ENCODE measurements at regions of chr1 and their contacts with region 1.

Region 1: DNA sequence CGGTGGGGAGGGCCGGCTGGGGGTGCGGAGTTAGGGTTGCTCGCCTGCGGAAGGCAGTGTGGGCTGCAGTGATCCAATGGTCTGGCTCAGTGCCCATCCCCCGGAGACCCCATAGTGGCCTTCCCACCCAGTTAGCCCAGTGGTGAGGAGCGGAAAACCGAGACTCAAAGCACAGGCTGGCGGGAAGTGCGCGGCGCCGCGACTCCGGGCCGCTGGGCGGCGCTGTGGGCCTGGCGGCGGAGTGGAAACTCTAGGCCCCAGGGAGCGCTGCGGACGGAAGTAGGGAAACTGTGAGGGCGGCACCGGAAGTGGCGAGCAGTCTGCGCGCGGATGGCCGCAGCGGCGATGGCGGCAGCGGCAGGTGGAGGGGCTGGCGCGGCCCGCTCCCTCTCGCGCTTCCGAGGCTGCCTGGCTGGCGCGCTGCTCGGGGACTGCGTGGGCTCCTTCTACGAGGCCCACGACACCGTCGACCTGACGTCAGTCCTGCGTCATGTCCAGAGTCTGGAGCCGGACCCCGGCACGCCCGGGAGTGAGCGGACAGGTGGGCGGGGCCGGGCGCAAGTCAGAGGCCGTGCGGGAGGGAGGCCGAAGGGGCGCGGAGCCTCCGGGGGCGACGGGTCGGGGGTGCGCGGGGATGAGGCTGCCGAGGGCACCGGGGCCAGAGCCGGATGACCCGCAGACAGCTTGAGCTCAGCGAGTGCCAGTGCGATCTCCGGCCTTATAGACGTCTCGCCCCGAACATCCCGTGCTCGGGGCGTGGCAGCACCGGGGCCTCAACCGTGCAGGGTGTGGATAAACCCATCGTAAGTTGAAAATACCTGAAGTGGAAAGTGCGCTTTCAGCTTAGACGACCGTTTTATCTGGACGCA is at the start of gene ADPRS:
- DNase-seq: peak; percentile 89
- H3K4me3 Mint-ChIP-seq: peak within 1 kb of the TSS; percentile 90
- H3K27ac Mint-ChIP-seq: peak within 1 kb of the TSS; percentile 83
- H3K4me1 Mint-ChIP-seq: peaks cover 9% of the 10 kb centered on the region
- H3K27me3 Mint-ChIP-seq: peaks cover 3% of the 10 kb centered on the region
- total RNA-seq, gene ADPRS: 33.6 and 35.3 TPM in 2 replicates

Region 2: DNA sequence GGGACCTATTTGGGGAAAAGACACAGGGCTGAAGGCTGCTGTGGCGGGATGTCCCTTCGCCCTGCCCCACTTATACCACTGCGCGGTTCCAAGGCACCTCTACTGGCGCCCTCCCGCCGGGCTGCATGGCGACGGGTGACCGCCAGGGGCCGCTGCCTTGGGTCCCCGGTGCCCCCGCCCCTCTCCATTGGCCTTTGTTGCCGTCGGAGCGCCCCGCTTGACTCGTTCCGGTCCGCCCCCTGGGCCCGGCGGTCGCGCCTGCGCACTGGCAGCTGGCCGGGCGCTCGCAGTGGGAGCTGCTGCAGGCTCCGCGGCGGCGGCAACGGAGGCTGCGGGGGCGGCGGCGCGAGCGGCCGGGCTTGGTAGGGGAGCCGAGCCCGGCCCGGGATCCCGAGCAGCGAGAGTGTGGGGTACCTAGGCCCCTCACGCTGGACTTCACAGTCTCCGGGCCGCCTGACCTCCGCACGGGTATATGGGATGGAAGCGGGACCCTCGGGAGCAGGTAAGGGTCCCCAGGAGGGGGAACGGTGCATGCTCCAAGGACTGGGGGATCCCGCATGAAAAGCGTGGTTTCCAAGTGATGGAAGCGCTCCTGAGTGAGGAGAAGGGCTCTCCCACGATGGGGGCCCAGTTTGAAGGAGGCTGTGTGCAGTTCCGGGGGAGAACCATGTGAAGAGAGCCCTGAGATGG is 205.7 kb before region 1 on chr1 and contains the start of gene AGO1:
- intact Hi-C with region 1: loop called (anchors 1 kb)
- DNase-seq: peak; percentile 95
- H3K4me3 Mint-ChIP-seq: peak within 1 kb of the TSS; percentile 92
- H3K27ac Mint-ChIP-seq: peak within 1 kb of the TSS; percentile 73
- H3K4me1 Mint-ChIP-seq: peaks cover 41% of the 10 kb centered on the region
- H3K27me3 Mint-ChIP-seq: peaks cover 3% of the 10 kb centered on the region
- total RNA-seq, gene AGO1: 36.9 and 38.6 TPM in 2 replicates

Region 3: DNA sequence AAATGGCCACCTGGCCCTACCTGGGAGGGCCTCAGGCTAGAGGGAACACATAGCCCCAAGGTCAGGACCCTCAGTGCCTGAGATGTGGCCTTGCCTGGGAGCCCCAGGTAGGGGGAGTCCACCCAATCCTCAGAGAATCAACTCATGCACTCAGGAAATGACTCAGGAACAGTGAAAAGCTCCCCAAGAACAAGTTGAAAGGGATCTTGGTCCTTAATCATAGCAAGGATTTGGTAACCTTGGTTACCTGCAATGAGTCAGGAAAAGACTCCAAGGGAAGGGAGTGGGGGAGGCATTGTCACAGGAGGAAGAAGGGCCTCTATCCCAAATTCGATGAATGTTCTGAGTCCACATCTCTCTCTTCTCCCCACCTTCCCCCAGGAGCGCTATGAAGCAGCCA is 84.2 kb after region 1 on chr1:
- intact Hi-C with region 1: no loop called
- DNase-seq: no peak
- H3K4me3 Mint-ChIP-seq: no peak overlapping the region
- H3K27ac Mint-ChIP-seq: no peak overlapping the region
- H3K4me1 Mint-ChIP-seq: peaks cover 7% of the 10 kb centered on the region
- H3K27me3 Mint-ChIP-seq: no peaks in the 10 kb centered on the region

Measured in activated T-helper 2 cell treated with anti-CD3 and anti-CD28 coated beads, Interferon-gamma antibody, Interleukin-2, Interleukin-4, amounts not matched to agents 10 μg/mL and 5 μg/mL and 100 μg/mL, durations not matched to agents 14 hours and 24 hours and 36 hours (primary cell).